ENCODE measurements at regions of chr3 and their contacts with region 1.

Region 1: GRCh38 chr3:36957862-36958686 is 13.2 kb upstream of the TRANK1 start:
- DNase-seq: no peak
- ATAC-seq: peak; percentile 20; the same call in 2 of the 3 replicates
- H3K4me3 ChIP-seq: no peak overlapping the region
- H3K27ac ChIP-seq: no peak overlapping the region
- H3K4me1 ChIP-seq: no peaks in the 10 kb centered on the region
- H3K27me3 ChIP-seq: no peaks in the 10 kb centered on the region
- CTCF ChIP-seq: no peak
- EP300 ChIP-seq: no peak
- POLR2A ChIP-seq: no peak
- RAD21 ChIP-seq: no peak

Region 2: GRCh38 chr3:36734742-36735141 is 223.3 kb before region 1 on chr3:
- CTCF ChIA-PET with region 1: interaction called, 68 read pairs
- POLR2A ChIA-PET with region 1: no interaction called
- RAD21 ChIA-PET with region 1: interaction called, 16 read pairs
- SMC1A ChIA-PET with region 1: interaction called, 25 read pairs
- in situ Hi-C with region 1: loop called (anchors 5 kb)
- intact Hi-C with region 1: loop called (anchors 1 kb)
- DNase-seq: no peak
- ATAC-seq: no peak
- H3K4me3 ChIP-seq: no peak overlapping the region
- H3K27ac ChIP-seq: no peak overlapping the region
- H3K4me1 ChIP-seq: no peaks in the 10 kb centered on the region
- H3K27me3 ChIP-seq: peaks cover 0 to 2% of the 10 kb centered on the region in 2 experiments; a peak in 1 of 4 replicates
- CTCF ChIP-seq: no peak
- EP300 ChIP-seq: no peak
- POLR2A ChIP-seq: no peak
- RAD21 ChIP-seq: no peak

Region 3: DNA sequence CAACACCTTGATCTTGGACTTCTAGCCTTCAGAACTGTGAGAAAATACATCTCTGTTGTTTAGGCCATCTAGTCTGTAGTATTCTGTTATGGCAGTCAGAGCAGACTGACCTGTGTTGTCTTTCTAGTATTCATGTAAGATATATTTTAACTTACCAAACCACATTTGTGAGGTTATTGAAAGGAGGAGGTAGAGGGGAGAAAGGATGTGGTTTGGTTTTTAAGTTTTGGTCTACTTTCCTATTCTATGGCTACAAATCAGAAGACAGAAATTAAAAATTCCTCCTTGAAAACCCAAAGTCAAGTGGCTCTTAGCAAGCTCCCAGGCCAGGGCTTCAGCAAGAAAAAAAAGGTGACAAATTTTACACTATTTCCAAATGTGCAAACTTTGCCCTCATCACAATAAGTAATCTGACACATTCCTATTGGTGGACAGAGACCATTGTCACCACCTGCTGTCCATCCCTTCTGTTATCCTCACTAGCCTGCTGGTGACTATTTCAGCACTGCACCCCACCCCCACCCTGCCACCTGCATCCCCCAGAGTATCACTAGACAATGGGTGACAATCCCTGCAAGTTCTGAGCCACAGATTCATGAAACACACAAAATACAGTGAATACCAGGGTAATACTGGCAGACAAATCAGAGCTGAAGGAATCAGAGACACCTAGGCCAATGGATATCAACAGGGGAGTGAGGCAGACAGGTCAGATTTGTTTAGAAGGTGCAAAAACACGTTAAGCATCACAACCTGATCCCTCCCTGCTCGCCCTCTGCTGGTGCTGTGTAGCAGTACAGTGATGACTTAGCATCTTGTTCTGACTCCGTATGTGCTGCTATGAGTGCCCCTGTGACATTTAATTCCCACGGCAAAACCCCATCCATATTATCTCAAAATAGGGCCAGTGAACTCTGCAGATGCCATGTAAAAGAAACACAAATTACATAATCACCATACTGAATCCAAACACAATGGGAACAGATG is 114.7 kb before region 1 on chr3:
- CTCF ChIA-PET with region 1: interaction called, 16 read pairs
- POLR2A ChIA-PET with region 1: no interaction called
- RAD21 ChIA-PET with region 1: interaction called, 4 read pairs
- SMC1A ChIA-PET with region 1: interaction called, 5 read pairs
- in situ Hi-C with region 1: no loop called
- intact Hi-C with region 1: no loop called
- DNase-seq: peak; percentile 15
- ATAC-seq: peak; percentile 89
- H3K4me3 ChIP-seq: no peak overlapping the region
- H3K27ac ChIP-seq: no peak overlapping the region
- H3K4me1 ChIP-seq: peaks cover 3% of the 10 kb centered on the region
- H3K27me3 ChIP-seq: no peaks in the 10 kb centered on the region
- CTCF ChIP-seq: peak; percentile 47 to 77 (median 59); a peak in 5 of 6 replicates
- EP300 ChIP-seq: no peak
- POLR2A ChIP-seq: no peak
- RAD21 ChIP-seq: 0 out of 2 replicates have a peak, but pooled peaks have one; percentile 18

Region 4: GRCh38 chr3:36893137-36893557 is 64.9 kb before region 1 on chr3:
- CTCF ChIA-PET with region 1: interaction called, 35 read pairs
- POLR2A ChIA-PET with region 1: no interaction called
- RAD21 ChIA-PET with region 1: interaction called, 21 read pairs
- SMC1A ChIA-PET with region 1: interaction called, 26 read pairs
- in situ Hi-C with region 1: no loop called
- intact Hi-C with region 1: no loop called
- DNase-seq: no peak
- ATAC-seq: peak; percentile 56
- H3K4me3 ChIP-seq: no peak overlapping the region
- H3K27ac ChIP-seq: no peak overlapping the region; the same call in 1 of the 2 replicates
- H3K4me1 ChIP-seq: peaks cover 35% of the 10 kb centered on the region
- H3K27me3 ChIP-seq: no peaks in the 10 kb centered on the region
- CTCF ChIP-seq: no peak
- EP300 ChIP-seq: no peak
- POLR2A ChIP-seq: no peak
- RAD21 ChIP-seq: no peak

Region 5: GRCh38 chr3:36924744-36925521 is 33.1 kb before region 1 on chr3:
- CTCF ChIA-PET with region 1: interaction called, 14 read pairs
- POLR2A ChIA-PET with region 1: no interaction called
- RAD21 ChIA-PET with region 1: no interaction called
- SMC1A ChIA-PET with region 1: interaction called, 4 read pairs
- in situ Hi-C with region 1: no loop called
- intact Hi-C with region 1: no loop called
- DNase-seq: no peak
- ATAC-seq: no peak
- H3K4me3 ChIP-seq: no peak overlapping the region
- H3K27ac ChIP-seq: no peak overlapping the region
- H3K4me1 ChIP-seq: no peaks in the 10 kb centered on the region
- H3K27me3 ChIP-seq: peaks cover 0 to 1% of the 10 kb centered on the region in 2 experiments; a peak in 1 of 4 replicates
- CTCF ChIP-seq: no peak
- EP300 ChIP-seq: no peak
- POLR2A ChIP-seq: no peak
- RAD21 ChIP-seq: no peak

Region 6: DNA sequence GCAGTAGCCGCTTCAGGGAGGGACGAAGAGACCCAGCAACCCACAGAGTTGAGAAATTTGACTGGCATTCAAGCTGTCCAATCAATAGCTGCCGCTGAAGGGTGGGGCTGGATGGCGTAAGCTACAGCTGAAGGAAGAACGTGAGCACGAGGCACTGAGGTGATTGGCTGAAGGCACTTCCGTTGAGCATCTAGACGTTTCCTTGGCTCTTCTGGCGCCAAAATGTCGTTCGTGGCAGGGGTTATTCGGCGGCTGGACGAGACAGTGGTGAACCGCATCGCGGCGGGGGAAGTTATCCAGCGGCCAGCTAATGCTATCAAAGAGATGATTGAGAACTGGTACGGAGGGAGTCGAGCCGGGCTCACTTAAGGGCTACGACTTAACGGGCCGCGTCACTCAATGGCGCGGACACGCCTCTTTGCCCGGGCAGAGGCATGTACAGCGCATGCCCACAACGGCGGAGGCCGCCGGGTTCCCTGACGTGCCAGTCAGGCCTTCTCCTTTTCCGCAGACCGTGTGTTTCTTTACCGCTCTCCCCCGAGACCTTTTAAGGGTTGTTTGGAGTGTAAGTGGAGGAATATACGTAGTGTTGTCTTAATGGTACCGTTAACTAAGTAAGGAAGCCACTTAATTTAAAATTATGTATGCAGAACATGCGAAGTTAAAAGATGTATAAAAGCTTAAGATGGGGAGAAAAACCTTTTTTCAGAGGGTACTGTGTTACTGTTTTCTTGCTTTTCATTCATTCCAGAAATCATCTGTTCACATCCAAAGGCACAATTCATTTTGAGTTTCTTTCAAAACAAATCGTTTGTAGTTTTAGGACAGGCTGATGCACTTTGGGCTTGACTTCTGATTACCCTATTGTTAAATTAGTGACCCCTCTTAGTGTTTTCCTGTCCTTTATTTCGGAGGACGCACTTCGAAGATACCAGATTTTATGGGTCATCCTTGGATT is 35.5 kb after region 1 on chr3 and contains the start of gene MLH1:
- CTCF ChIA-PET with region 1: interaction called, 39 read pairs
- POLR2A ChIA-PET with region 1: interaction called, 3 read pairs
- RAD21 ChIA-PET with region 1: interaction called, 11 read pairs
- SMC1A ChIA-PET with region 1: interaction called, 19 read pairs
- in situ Hi-C with region 1: no loop called
- intact Hi-C with region 1: no loop called
- DNase-seq: peak; percentile 100
- ATAC-seq: peak; percentile 88
- H3K4me3 ChIP-seq: peak within 1 kb of the TSS; percentile 97
- H3K27ac ChIP-seq: peak within 1 kb of the TSS; percentile 92
- H3K4me1 ChIP-seq: no peaks in the 10 kb centered on the region
- H3K27me3 ChIP-seq: no peaks in the 10 kb centered on the region
- CTCF ChIP-seq: no peak
- EP300 ChIP-seq: no peak
- POLR2A ChIP-seq: peak; percentile 85
- RAD21 ChIP-seq: no peak
- polyA plus RNA-seq, gene MLH1: 58.6 to 67.3 TPM